Caco-2 (cell line): ENCODE measurements at regions of chr5 and their contacts with region 1.

Region 1: DNA sequence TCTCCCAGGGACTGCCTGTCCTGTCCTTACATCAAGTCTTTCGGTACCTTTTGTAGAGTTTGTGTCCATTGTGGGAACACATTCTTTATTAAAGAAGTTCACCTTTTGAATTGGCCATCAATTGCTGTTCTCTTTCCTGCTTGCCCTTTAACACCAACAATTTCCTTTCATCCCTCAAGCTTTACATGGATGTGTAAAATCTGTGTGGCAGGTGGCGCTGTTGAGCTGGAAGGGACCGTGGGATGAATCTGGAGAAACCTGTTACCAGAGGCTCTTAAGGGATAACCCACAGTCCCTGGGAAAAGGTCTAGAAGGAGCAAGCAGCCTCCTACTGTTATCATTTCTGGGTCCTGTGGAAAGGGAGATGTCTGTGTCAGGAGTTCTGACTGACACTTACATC is 7.9 kb upstream of the ZFP62 start:
- DNase-seq: peak; percentile 90
- H3K4me3 ChIP-seq: no peak overlapping the region
- H3K4me3 Mint-ChIP-seq: no peak overlapping the region
- H3K27ac Mint-ChIP-seq: no peak overlapping the region
- H3K4me1 ChIP-seq: peaks cover 6% of the 10 kb centered on the region; the same call in 1 of the 2 replicates
- H3K4me1 Mint-ChIP-seq: peaks cover 19% of the 10 kb centered on the region
- H3K27me3 ChIP-seq: no peaks in the 10 kb centered on the region
- H3K27me3 Mint-ChIP-seq: no peaks in the 10 kb centered on the region
- CTCF ChIP-seq: peak; percentile 90 to 96

Region 2: DNA sequence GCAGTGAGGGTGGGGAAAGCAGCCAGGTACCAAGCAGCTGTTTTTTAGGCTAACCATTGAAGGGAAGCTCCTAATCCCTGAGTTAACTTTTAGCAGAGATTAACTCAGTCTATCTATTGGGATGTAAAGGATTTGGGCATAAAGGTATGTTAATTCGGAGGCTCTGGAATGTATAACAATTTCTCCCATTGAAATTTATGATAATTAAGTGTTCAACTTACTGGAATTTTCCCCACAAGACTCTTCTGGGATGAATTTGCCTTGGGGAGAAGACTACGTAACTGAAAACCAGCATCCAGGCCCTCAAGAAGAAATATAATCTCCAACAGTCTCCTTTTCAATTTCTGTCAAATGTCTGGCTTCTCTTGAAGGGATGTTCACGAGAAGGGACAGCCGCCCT is 31.5 kb before region 1 on chr5:
- CTCF ChIA-PET with region 1: no interaction called
- POLR2A ChIA-PET with region 1: no interaction called
- intact Hi-C with region 1: no loop called
- DNase-seq: no peak
- H3K4me3 ChIP-seq: no peak overlapping the region
- H3K4me3 Mint-ChIP-seq: no peak overlapping the region
- H3K27ac Mint-ChIP-seq: no peak overlapping the region
- H3K4me1 ChIP-seq: no peaks in the 10 kb centered on the region
- H3K4me1 Mint-ChIP-seq: no peaks in the 10 kb centered on the region
- H3K27me3 ChIP-seq: no peaks in the 10 kb centered on the region
- H3K27me3 Mint-ChIP-seq: no peaks in the 10 kb centered on the region
- CTCF ChIP-seq: no peak

Region 3: GRCh38 chr5:180848878-180849277 is 20.1 kb before region 1 on chr5:
- CTCF ChIA-PET with region 1: no interaction called
- POLR2A ChIA-PET with region 1: no interaction called
- intact Hi-C with region 1: no loop called
- DNase-seq: no peak
- H3K4me3 ChIP-seq: no peak overlapping the region
- H3K4me3 Mint-ChIP-seq: no peak overlapping the region
- H3K27ac Mint-ChIP-seq: no peak overlapping the region
- H3K4me1 ChIP-seq: no peaks in the 10 kb centered on the region
- H3K4me1 Mint-ChIP-seq: no peaks in the 10 kb centered on the region
- H3K27me3 ChIP-seq: no peaks in the 10 kb centered on the region
- H3K27me3 Mint-ChIP-seq: no peaks in the 10 kb centered on the region
- CTCF ChIP-seq: no peak

Region 4: GRCh38 chr5:180885872-180886418 is 17.0 kb after region 1 on chr5:
- CTCF ChIA-PET with region 1: interaction called, 4 read pairs
- POLR2A ChIA-PET with region 1: no interaction called
- intact Hi-C with region 1: loop called (anchors 2 kb)
- DNase-seq: peak; percentile 84 to 92
- H3K4me3 ChIP-seq: peak overlapping the region; percentile 26
- H3K4me3 Mint-ChIP-seq: peak overlapping the region; percentile 59
- H3K27ac Mint-ChIP-seq: peak overlapping the region; percentile 73
- H3K4me1 ChIP-seq: peaks cover 16% of the 10 kb centered on the region
- H3K4me1 Mint-ChIP-seq: peaks cover 11% of the 10 kb centered on the region
- H3K27me3 ChIP-seq: no peaks in the 10 kb centered on the region
- H3K27me3 Mint-ChIP-seq: no peaks in the 10 kb centered on the region
- CTCF ChIP-seq: no peak

Region 5: DNA sequence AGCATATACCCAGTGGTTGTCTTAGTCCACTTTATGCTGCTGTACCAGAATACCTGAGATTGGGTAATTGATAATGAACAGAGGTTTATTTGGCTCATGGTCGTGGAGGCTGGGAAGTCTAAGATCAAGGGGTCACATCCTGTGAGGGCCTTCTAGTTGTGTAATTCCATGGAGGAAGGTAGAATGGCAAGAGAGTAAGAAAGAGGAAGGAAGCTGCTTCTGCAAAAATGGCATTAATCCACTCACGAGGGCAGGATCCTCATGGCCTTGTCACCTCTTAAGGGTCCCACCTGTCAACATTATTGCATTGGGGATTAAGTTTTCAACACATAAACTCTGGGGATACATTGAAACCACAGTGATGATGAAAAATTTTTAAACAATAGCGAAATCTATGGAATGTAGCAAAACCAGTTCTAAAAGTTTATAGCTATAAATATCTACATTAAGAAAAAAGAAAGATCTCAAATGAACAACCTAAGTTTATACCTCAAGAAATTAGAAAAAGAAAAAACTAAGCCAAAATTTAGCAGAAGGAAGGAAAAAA is 47.0 kb after region 1 on chr5:
- CTCF ChIA-PET with region 1: no interaction called
- POLR2A ChIA-PET with region 1: no interaction called
- intact Hi-C with region 1: no loop called
- DNase-seq: no peak
- H3K4me3 ChIP-seq: no peak overlapping the region
- H3K4me3 Mint-ChIP-seq: no peak overlapping the region
- H3K27ac Mint-ChIP-seq: no peak overlapping the region
- H3K4me1 ChIP-seq: peaks cover 16% of the 10 kb centered on the region; the same call in 1 of the 2 replicates
- H3K4me1 Mint-ChIP-seq: peaks cover 20% of the 10 kb centered on the region
- H3K27me3 ChIP-seq: no peaks in the 10 kb centered on the region
- H3K27me3 Mint-ChIP-seq: no peaks in the 10 kb centered on the region
- CTCF ChIP-seq: no peak

Region 6: DNA sequence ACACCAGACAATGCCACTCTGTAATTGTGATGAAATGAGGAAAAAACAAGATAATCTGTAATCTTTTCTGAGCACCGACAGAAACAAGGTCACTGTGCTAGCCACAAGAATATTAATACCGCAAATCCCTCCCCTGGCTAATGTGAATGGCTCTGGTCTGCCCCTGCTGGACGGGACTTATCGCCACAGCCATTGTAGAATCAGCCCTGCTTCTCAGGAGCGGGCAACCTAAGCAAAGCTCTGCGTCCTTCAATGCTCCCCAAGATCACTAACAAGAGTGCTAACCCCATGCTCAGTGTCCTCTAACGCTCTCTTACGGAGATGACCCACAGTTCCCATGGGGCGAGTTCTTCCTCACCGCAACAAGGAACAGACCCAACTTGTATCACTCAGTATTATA is 219.3 kb after region 1 on chr5:
- CTCF ChIA-PET with region 1: no interaction called
- POLR2A ChIA-PET with region 1: no interaction called
- intact Hi-C with region 1: loop called (anchors 5 kb)
- DNase-seq: peak in 1 of 2 experiments; percentile 30
- H3K4me3 ChIP-seq: no peak overlapping the region
- H3K4me3 Mint-ChIP-seq: no peak overlapping the region
- H3K27ac Mint-ChIP-seq: no peak overlapping the region
- H3K4me1 ChIP-seq: no peaks in the 10 kb centered on the region
- H3K4me1 Mint-ChIP-seq: no peaks in the 10 kb centered on the region
- H3K27me3 ChIP-seq: no peaks in the 10 kb centered on the region
- H3K27me3 Mint-ChIP-seq: no peaks in the 10 kb centered on the region
- CTCF ChIP-seq: peak; percentile 42 to 44

Region 7: GRCh38 chr5:181109489-181110013 is 240.6 kb after region 1 on chr5:
- CTCF ChIA-PET with region 1: no interaction called
- POLR2A ChIA-PET with region 1: no interaction called
- intact Hi-C with region 1: loop called (anchors 5 kb)
- DNase-seq: no peak
- H3K4me3 ChIP-seq: no peak overlapping the region
- H3K4me3 Mint-ChIP-seq: no peak overlapping the region
- H3K27ac Mint-ChIP-seq: no peak overlapping the region
- H3K4me1 ChIP-seq: no peaks in the 10 kb centered on the region
- H3K4me1 Mint-ChIP-seq: no peaks in the 10 kb centered on the region
- H3K27me3 ChIP-seq: no peaks in the 10 kb centered on the region; the same call in 1 of the 2 replicates
- H3K27me3 Mint-ChIP-seq: peaks cover 3% of the 10 kb centered on the region
- CTCF ChIP-seq: no peak

Region 8: DNA sequence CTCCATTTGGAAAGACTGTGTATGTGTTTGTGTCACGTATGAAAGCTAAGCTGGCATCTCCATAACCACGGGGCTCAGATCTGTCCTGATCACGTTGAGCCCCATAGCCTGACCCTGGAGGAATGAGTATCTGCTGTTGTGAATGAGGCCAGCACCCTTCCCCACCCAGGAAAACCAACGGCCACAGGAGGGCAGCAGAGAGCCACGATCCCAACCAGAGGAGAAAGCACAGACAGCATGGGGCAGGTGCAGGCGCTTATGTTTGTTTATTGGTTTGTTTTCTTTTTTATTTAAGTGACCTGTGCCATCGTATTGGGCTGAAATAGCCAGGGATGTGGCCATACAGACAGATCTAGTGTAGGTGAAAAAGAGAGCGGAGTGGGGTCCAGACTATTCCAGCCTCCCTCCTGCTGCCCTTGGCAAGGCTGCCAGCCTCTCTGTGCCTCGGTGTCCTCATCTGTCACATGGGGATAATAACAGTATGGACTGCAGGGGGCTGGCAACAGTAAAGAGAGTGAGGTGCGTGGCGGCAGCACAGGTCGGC is 290.4 kb after region 1 on chr5:
- CTCF ChIA-PET with region 1: no interaction called
- POLR2A ChIA-PET with region 1: no interaction called
- intact Hi-C with region 1: loop called (anchors 5 kb)
- DNase-seq: peak; percentile 89 to 93
- H3K4me3 ChIP-seq: no peak overlapping the region
- H3K4me3 Mint-ChIP-seq: peak overlapping the region; percentile 22
- H3K27ac Mint-ChIP-seq: peak overlapping the region; percentile 70
- H3K4me1 ChIP-seq: peaks cover 11% of the 10 kb centered on the region
- H3K4me1 Mint-ChIP-seq: peaks cover 7% of the 10 kb centered on the region
- H3K27me3 ChIP-seq: no peaks in the 10 kb centered on the region
- H3K27me3 Mint-ChIP-seq: peaks cover 3% of the 10 kb centered on the region
- CTCF ChIP-seq: peak; percentile 92 to 93